ENCODE measurements at regions of chr4 and their contacts with region 1.

Region 1: GRCh38 chr4:57442831-57443291 is 332.7 kb upstream of the IGFBP7 start:
- DNase-seq: no peak

Region 2: GRCh38 chr4:57214654-57215411 is 228.0 kb before region 1 on chr4:
- intact Hi-C with region 1: no loop called
- DNase-seq: no peak

Region 3: GRCh38 chr4:57426779-57427395 is 16.0 kb before region 1 on chr4:
- intact Hi-C with region 1: no loop called
- DNase-seq: no peak

Region 4: DNA sequence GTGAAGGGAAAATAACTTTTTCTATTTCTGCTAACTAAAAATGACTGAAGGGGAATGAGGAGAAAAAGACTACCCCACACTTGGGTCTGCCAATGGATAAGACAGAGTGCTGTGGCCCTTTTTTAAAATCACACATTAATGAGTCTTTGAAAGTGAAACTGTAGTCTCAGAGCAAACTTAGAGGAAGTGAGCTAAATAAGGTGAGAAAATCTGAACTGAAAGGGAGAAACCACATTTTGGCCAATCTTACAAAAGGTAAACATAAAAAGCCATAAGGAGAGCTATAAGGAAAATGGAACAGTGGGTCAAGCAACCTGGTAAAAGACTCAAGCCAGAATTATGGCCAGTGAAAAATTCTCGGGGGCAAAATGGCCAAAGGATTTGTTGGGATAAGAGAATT is 422.4 kb after region 1 on chr4:
- intact Hi-C with region 1: no loop called
- DNase-seq: no peak

Region 5: DNA sequence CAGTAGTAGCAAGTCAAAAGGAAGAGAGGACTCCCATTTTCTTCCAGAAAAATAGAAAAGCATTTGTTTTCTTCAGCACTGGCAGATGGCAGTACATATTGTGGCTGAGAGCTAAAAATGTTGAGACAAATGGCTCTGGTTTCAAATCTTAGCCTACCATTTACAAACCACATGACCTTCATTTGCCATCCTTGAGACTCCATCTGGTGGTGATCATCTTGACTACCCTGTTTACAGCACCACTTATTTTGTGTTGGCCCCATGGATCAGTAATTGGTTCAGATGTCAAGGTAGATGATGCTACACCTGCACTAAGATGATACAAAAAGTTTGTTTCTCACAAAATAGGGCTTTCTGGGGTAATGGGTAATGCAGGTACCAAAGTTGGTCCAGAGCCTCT is 619.1 kb after region 1 on chr4:
- intact Hi-C with region 1: loop called (anchors 5 kb)
- DNase-seq: no peak

Measured in cardiac septum (tissue), 1 donor.